ENCODE measurements at regions of chr2 and their contacts with region 1.

Region 1: DNA sequence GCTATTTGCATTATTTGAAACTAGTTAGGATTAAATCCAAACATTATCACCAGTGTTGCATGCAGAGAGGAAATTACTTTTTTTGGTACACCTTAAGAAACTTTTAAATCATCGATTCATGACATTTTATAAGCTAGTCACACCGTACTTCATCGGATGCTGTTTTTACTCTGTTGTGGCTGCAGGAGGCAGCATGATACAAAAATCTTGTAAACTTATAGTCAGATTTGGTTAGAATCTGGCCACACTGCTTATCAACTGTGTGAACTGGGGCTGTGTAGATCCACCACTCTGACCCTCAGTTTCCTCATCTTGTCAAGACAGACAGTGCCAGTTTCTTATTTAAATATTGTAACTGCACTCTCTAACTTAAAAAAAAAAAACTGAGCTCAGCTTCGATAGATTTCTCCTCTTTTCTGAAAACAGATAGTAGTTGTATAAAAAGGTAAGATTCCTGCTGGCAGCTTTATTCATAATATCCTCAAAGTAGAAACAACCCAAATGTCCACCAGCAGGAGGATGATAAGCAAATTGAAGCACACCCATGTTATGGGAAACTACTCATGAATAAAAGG is 77.8 kb downstream of the RAPGEF4 start:
- DNase-seq: no peak
- H3K4me3 ChIP-seq: no peak overlapping the region
- H3K27ac ChIP-seq: no peak overlapping the region
- H3K27me3 ChIP-seq: no peaks in the 10 kb centered on the region
- CTCF ChIP-seq: peak; percentile 63

Region 2: GRCh38 chr2:173021939-173022371 is 208.6 kb after region 1 on chr2:
- CTCF ChIA-PET with region 1: interaction called, 97 read pairs
- POLR2A ChIA-PET with region 1: no interaction called
- DNase-seq: no peak
- H3K4me3 ChIP-seq: no peak overlapping the region
- H3K27ac ChIP-seq: no peak overlapping the region
- H3K27me3 ChIP-seq: no peaks in the 10 kb centered on the region
- CTCF ChIP-seq: peak; percentile 61

Measured in AG04450 (cell line).